ENCODE measurements at regions of chr12 and their contacts with region 1.

Region 1: GRCh38 chr12:19201661-19202060 is 72.1 kb downstream of the PLEKHA5 start:
- DNase-seq: no peak
- ATAC-seq: no peak
- H3K4me3 ChIP-seq: no peak overlapping the region
- H3K27ac ChIP-seq: no peak overlapping the region
- H3K4me1 ChIP-seq: peaks cover 0 to 46% (median 19%) of the 10 kb centered on the region in 12 donors
- H3K27me3 ChIP-seq: no peaks in the 10 kb centered on the region
- CTCF ChIP-seq: no peak
- POLR2A ChIP-seq: no peak

Region 2: GRCh38 chr12:18552829-18553228 is 648.8 kb before region 1 on chr12:
- intact Hi-C with region 1: loop called in 1 of 10 experiments (anchors 10 kb)
- DNase-seq: no peak
- ATAC-seq: no peak
- H3K4me3 ChIP-seq: no peak overlapping the region
- H3K27ac ChIP-seq: no peak overlapping the region
- H3K4me1 ChIP-seq: peaks cover 0 to 5% (median 0%) of the 10 kb centered on the region in 12 donors
- H3K27me3 ChIP-seq: no peaks in the 10 kb centered on the region
- CTCF ChIP-seq: peak in 6 of 12 donors; percentile 10 to 40 (median 28)
- POLR2A ChIP-seq: no peak

Region 3: GRCh38 chr12:18998343-18999261 is 203.1 kb before region 1 on chr12:
- intact Hi-C with region 1: no loop called
- DNase-seq: no peak
- ATAC-seq: no peak
- H3K4me3 ChIP-seq: no peak overlapping the region
- H3K27ac ChIP-seq: no peak overlapping the region
- H3K4me1 ChIP-seq: no peaks in the 10 kb centered on the region
- H3K27me3 ChIP-seq: no peaks in the 10 kb centered on the region
- CTCF ChIP-seq: no peak
- POLR2A ChIP-seq: no peak

Measured in heart left ventricle (tissue), 16 donors.